CD14-positive monocyte (primary cell): ENCODE measurements at regions of chr2 and their contacts with region 1.

Region 1: DNA sequence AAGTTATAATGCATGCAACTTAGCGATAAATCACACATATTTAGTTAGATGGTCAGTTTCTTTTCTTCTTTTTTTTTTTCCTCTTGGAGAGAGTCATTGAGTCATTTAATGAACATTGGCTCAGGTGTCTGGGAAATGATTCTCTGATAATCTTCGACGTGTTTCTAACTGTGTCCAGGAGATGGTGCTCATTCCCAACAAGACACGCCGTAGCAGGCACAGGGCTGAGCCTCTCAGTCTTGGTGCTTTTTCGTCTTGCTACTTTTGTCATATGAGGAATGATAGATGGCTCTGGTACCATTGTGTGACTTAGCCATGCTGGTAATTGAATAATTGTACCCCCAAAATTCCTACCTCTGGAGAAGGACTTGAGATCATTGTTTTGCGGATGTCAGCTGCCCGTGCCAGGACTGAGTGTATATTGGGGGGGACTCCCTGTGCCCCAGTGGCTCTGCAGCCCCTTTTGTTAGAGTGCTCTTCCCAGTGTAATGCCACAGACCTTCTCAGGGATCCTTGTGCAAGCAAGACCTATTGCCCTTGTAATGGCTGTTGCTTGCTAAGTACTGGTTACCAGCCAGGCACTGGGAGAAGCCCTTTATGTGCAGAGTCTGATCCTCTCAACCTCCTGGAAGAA is 107.6 kb upstream of the CYRIA start:
- DNase-seq: peak; percentile 40 to 65 (median 57)
- H3K4me3 ChIP-seq: no peak overlapping the region
- H3K4me3 Mint-ChIP-seq: no peak overlapping the region
- H3K27ac ChIP-seq: no peak overlapping the region
- H3K27ac Mint-ChIP-seq: peak overlapping the region in 1 of 7 donors; percentile 68
- H3K4me1 ChIP-seq: peaks cover 10 to 13% of the 10 kb centered on the region in 2 donors
- H3K4me1 Mint-ChIP-seq: peaks cover 16% of the 10 kb centered on the region
- H3K27me3 ChIP-seq: no peaks in the 10 kb centered on the region
- H3K27me3 Mint-ChIP-seq: peaks cover 0 to 7% (median 1%) of the 10 kb centered on the region in 3 donors
- CTCF ChIP-seq: peak; percentile 85

Region 2: GRCh38 chr2:15521641-15522181 is 1251.5 kb before region 1 on chr2:
- intact Hi-C with region 1: no loop called
- DNase-seq: no peak
- H3K4me3 ChIP-seq: no peak overlapping the region
- H3K4me3 Mint-ChIP-seq: no peak overlapping the region
- H3K27ac ChIP-seq: no peak overlapping the region
- H3K27ac Mint-ChIP-seq: no peak overlapping the region
- H3K4me1 ChIP-seq: peaks cover 4 to 14% of the 10 kb centered on the region in 2 donors
- H3K4me1 Mint-ChIP-seq: peaks cover 14% of the 10 kb centered on the region
- H3K27me3 ChIP-seq: no peaks in the 10 kb centered on the region
- H3K27me3 Mint-ChIP-seq: no peaks in the 10 kb centered on the region
- CTCF ChIP-seq: no peak

Region 3: DNA sequence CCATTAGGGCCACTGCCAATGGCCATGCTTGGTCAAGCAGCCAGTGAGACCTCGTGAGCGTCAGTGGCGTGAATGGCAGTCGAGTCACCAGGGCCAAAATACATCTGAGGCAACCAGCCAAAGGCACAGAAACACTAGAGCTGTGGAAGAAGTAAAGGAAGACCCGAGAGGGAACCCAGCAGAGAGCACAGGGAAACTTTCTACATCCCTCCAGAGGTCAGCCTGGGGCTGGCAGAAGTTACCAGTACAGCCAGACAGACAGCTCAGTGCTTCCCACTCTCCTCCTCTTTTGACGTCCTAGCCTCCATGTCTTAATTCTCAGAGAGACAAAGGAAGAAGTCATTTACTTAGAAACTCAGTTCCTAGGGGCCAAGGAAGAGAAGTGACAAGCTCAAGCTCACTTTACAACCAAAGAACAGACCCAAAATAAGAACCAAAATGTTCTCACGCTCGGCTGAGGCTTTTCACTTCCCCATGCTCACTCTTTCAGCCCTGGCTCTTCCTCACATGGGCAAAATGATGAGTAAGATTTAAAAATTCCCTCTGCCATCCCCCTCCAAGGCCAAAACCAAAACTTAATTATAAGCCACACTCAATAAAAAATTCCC is 116.3 kb before region 1 on chr2:
- intact Hi-C with region 1: no loop called
- DNase-seq: peak; percentile 91 to 97 (median 93)
- H3K4me3 ChIP-seq: peak overlapping the region in 1 of 3 experiments; percentile 89
- H3K4me3 Mint-ChIP-seq: peak overlapping the region; percentile 57 to 77
- H3K27ac ChIP-seq: peak overlapping the region; percentile 93 to 98
- H3K27ac Mint-ChIP-seq: peak overlapping the region; percentile 95 to 99 (median 99)
- H3K4me1 ChIP-seq: peaks cover 91 to 98% of the 10 kb centered on the region in 2 donors
- H3K4me1 Mint-ChIP-seq: peaks cover 98% of the 10 kb centered on the region
- H3K27me3 ChIP-seq: no peaks in the 10 kb centered on the region
- H3K27me3 Mint-ChIP-seq: peaks cover 0 to 5% (median 2%) of the 10 kb centered on the region in 3 donors
- CTCF ChIP-seq: no peak

Region 4: GRCh38 chr2:16900405-16901025 is 127.3 kb after region 1 on chr2:
- intact Hi-C with region 1: loop called (anchors 2 to 5 kb)
- DNase-seq: peak; percentile 25 to 57 (median 54)
- H3K4me3 ChIP-seq: no peak overlapping the region
- H3K4me3 Mint-ChIP-seq: no peak overlapping the region
- H3K27ac ChIP-seq: no peak overlapping the region
- H3K27ac Mint-ChIP-seq: no peak overlapping the region
- H3K4me1 ChIP-seq: no peaks in the 10 kb centered on the region
- H3K4me1 Mint-ChIP-seq: no peaks in the 10 kb centered on the region
- H3K27me3 ChIP-seq: no peaks in the 10 kb centered on the region
- H3K27me3 Mint-ChIP-seq: peaks cover 0 to 2% (median 1%) of the 10 kb centered on the region in 3 donors
- CTCF ChIP-seq: peak; percentile 88

Region 5: GRCh38 chr2:17148407-17149145 is 375.4 kb after region 1 on chr2:
- intact Hi-C with region 1: loop called in 1 of 2 experiments (anchors 10 kb)
- DNase-seq: no peak
- H3K4me3 ChIP-seq: no peak overlapping the region
- H3K4me3 Mint-ChIP-seq: no peak overlapping the region
- H3K27ac ChIP-seq: no peak overlapping the region
- H3K27ac Mint-ChIP-seq: no peak overlapping the region
- H3K4me1 ChIP-seq: no peaks in the 10 kb centered on the region
- H3K4me1 Mint-ChIP-seq: no peaks in the 10 kb centered on the region
- H3K27me3 ChIP-seq: no peaks in the 10 kb centered on the region
- H3K27me3 Mint-ChIP-seq: peaks cover 0 to 2% (median 0%) of the 10 kb centered on the region in 3 donors
- CTCF ChIP-seq: no peak

Region 6: GRCh38 chr2:17309741-17310339 is 536.6 kb after region 1 on chr2:
- intact Hi-C with region 1: loop called (anchors 5 kb)
- DNase-seq: peak in 2 of 3 donors; percentile 12 to 22
- H3K4me3 ChIP-seq: no peak overlapping the region
- H3K4me3 Mint-ChIP-seq: no peak overlapping the region
- H3K27ac ChIP-seq: no peak overlapping the region
- H3K27ac Mint-ChIP-seq: no peak overlapping the region
- H3K4me1 ChIP-seq: no peaks in the 10 kb centered on the region
- H3K4me1 Mint-ChIP-seq: no peaks in the 10 kb centered on the region
- H3K27me3 ChIP-seq: no peaks in the 10 kb centered on the region
- H3K27me3 Mint-ChIP-seq: no peaks in the 10 kb centered on the region
- CTCF ChIP-seq: peak; percentile 70

Region 7: GRCh38 chr2:17672583-17673317 is 899.6 kb after region 1 on chr2:
- intact Hi-C with region 1: loop called in 1 of 2 experiments (anchors 10 kb)
- DNase-seq: no peak
- H3K4me3 ChIP-seq: no peak overlapping the region
- H3K4me3 Mint-ChIP-seq: no peak overlapping the region
- H3K27ac ChIP-seq: no peak overlapping the region
- H3K27ac Mint-ChIP-seq: no peak overlapping the region
- H3K4me1 ChIP-seq: no peaks in the 10 kb centered on the region
- H3K4me1 Mint-ChIP-seq: no peaks in the 10 kb centered on the region
- H3K27me3 ChIP-seq: no peaks in the 10 kb centered on the region
- H3K27me3 Mint-ChIP-seq: peaks cover 0 to 2% (median 0%) of the 10 kb centered on the region in 3 donors
- CTCF ChIP-seq: no peak